ENCODE measurements at regions of chr5 and their contacts with region 1.

Region 1: DNA sequence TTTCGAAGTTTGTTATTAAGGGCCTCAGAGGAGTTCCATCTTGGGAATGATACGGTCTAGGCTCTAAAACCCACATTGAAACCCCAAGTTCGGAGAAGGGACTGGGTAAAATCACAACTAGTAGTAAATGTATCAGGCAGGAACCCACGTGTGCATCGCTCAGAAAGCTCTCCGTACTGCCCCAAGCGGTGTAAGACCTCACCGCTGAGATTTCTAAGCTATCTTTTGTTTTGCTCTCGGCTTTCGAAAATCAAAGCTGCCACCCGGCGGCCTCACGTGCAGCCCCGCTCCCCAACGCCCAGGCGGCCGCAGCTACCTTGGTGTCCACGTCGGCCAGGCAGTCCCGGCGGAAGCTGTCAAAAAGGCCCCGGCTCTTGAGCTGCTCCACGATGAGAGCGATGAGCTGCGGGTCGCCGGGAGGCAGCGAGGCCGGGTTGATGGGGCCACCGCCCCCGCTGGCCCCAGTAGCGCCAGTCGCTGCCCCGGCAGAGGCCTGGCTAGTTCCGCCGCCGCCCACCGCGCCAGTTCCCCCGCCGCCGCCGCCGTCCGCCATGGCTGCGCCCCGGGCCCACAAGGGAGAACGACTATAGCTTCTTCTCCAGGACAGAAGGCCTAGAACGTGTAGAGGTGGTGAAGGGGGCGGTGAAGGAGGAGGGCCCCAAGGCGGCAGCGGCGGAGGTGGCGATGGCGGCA is 420 bp downstream of the BOD1 start:
- DNase-seq: peak; percentile 81
- H3K4me3 ChIP-seq: peak overlapping the region; percentile 69 to 86 (median 82)
- H3K27ac ChIP-seq: peak overlapping the region; percentile 85
- H3K4me1 ChIP-seq: peaks cover 28% of the 10 kb centered on the region
- H3K27me3 ChIP-seq: no peaks in the 10 kb centered on the region
- CTCF ChIP-seq: peak; percentile 67 to 75
- POLR2A ChIP-seq: peak; percentile 15

Region 2: GRCh38 chr5:172833686-172834414 is 782.2 kb before region 1 on chr5 and contains the start of gene ERGIC1:
- CTCF ChIA-PET with region 1: no interaction called
- POLR2A ChIA-PET with region 1: no interaction called
- dilution Hi-C with region 1: no loop called
- intact Hi-C with region 1: no loop called
- DNase-seq: peak; percentile 82
- H3K4me3 ChIP-seq: peak within 1 kb of the TSS; percentile 80 to 96 (median 80)
- H3K27ac ChIP-seq: peak within 1 kb of the TSS; percentile 71
- H3K4me1 ChIP-seq: peaks cover 12% of the 10 kb centered on the region
- H3K27me3 ChIP-seq: no peaks in the 10 kb centered on the region
- CTCF ChIP-seq: no peak
- POLR2A ChIP-seq: peak; percentile 72
- total RNA-seq, gene ERGIC1: 105 and 118 TPM in 2 replicates

Region 3: DNA sequence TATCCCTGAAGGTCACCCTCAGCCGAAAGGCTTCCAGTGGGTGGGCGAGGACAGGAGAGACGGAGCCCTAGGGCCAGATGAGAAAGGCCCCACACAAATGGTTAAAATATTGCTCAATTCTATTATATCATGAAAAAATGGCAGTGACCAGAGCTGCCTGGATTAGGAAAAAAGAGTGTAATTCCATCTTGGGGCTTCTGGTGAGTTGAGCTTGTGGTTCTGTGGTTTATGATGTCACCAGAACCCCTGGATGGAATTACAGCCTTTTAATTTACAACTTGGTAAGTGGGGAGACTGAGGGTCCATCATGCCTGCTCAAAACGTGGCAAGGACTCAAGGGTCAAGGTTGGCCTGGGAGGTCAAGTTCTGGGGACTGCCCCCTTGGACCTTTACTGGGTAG is 232.3 kb before region 1 on chr5:
- CTCF ChIA-PET with region 1: no interaction called
- POLR2A ChIA-PET with region 1: no interaction called
- dilution Hi-C with region 1: no loop called
- intact Hi-C with region 1: no loop called
- DNase-seq: no peak
- H3K4me3 ChIP-seq: no peak overlapping the region
- H3K27ac ChIP-seq: no peak overlapping the region
- H3K4me1 ChIP-seq: no peaks in the 10 kb centered on the region
- H3K27me3 ChIP-seq: no peaks in the 10 kb centered on the region
- CTCF ChIP-seq: no peak
- POLR2A ChIP-seq: no peak

Region 4: DNA sequence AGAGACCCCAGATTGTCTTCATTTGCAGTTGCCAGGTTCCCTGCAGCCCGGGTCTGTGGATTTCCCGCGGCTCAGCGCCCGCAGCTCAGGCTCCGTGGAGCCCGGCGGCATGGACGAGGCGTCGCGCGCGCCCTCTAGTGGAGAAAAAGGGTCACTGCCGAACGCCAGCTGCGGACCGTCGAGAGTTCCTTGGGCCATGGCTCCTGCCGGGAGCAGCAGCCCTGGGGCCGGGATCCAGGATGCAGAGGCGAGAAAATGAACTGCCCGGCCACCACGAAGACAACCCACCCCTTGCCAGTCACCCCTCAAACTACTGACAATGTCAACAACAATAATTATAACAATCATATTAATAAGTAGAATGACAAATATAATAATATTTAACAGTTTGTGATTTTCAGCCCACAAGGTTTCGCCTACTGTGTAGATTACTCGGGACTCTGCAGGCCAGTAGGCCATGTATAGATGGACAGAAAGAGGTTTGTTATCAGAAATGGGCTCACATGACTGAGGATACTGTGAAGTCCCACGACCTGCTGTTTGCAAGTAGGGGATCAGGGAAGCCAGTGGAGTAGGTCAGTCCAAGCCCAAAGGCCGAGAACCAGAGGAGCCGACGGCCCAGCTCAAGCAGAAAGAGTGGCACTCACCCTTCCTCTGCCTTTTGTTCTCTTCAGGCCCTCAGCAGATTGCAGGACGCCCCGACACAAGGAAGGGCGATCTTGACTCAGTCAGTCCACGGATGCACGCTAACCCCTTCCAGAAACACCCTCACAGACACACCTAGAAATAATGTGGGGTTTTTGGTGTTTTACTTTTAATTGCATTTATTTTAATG is 42.7 kb before region 1 on chr5:
- CTCF ChIA-PET with region 1: interaction called, 9 read pairs
- POLR2A ChIA-PET with region 1: no interaction called
- dilution Hi-C with region 1: no loop called
- intact Hi-C with region 1: loop called (anchors 1 kb)
- DNase-seq: peak; percentile 65
- H3K4me3 ChIP-seq: no peak overlapping the region
- H3K27ac ChIP-seq: no peak overlapping the region
- H3K4me1 ChIP-seq: peaks cover 2% of the 10 kb centered on the region
- H3K27me3 ChIP-seq: peaks cover 0 to 4% of the 10 kb centered on the region in 2 experiments
- CTCF ChIP-seq: peak; percentile 94 to 98
- POLR2A ChIP-seq: no peak

Region 5: GRCh38 chr5:173781814-173782670 is 166.0 kb after region 1 on chr5:
- CTCF ChIA-PET with region 1: no interaction called
- POLR2A ChIA-PET with region 1: no interaction called
- dilution Hi-C with region 1: no loop called
- intact Hi-C with region 1: loop called (anchors 1 kb)
- DNase-seq: peak; percentile 94
- H3K4me3 ChIP-seq: no peak overlapping the region
- H3K27ac ChIP-seq: peak overlapping the region; percentile 99
- H3K4me1 ChIP-seq: peaks cover 34% of the 10 kb centered on the region
- H3K27me3 ChIP-seq: no peaks in the 10 kb centered on the region
- CTCF ChIP-seq: no peak
- POLR2A ChIP-seq: peak; percentile 42

Region 6: DNA sequence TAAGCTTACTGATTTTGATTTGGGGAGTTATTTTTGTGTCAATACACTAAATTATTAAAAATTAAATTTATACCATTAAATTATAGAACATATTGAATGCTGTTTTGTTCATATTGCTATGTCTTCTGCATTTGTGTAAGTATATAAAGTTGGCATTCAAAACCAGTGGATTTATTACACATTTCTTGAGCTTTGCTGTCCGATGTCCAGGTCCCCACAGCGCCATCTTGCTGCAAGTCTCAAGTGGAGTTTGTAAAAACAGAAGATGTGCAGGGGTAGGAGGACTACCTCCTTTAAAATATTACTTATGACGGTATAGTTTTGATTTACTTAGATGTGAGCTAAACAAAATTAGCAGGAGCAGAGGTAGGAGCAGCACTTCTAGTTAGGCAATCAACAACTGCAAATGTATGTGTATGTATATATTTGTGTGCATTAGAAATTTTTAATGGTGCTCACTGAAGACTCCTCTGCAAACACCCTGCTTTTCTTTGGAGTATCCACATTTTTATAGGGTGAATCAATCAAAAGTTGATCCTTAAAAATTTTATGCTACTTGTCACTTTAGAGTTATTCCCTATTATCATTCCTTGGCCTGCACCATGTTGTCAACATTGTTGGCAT is 309.5 kb after region 1 on chr5:
- CTCF ChIA-PET with region 1: interaction called, 38 read pairs
- POLR2A ChIA-PET with region 1: interaction called, 3 read pairs
- dilution Hi-C with region 1: no loop called
- intact Hi-C with region 1: loop called (anchors 1 kb)
- DNase-seq: peak; percentile 70
- H3K4me3 ChIP-seq: no peak overlapping the region
- H3K27ac ChIP-seq: no peak overlapping the region
- H3K4me1 ChIP-seq: peaks cover 15% of the 10 kb centered on the region
- H3K27me3 ChIP-seq: no peaks in the 10 kb centered on the region
- CTCF ChIP-seq: peak; percentile 48 to 57
- POLR2A ChIP-seq: no peak

Region 7: GRCh38 chr5:174311531-174312269 is 695.7 kb after region 1 on chr5:
- CTCF ChIA-PET with region 1: interaction called, 61 read pairs
- POLR2A ChIA-PET with region 1: no interaction called
- dilution Hi-C with region 1: no loop called
- intact Hi-C with region 1: loop called (anchors 1 kb)
- DNase-seq: peak; percentile 29
- H3K4me3 ChIP-seq: peak overlapping the region in 1 of 3 experiments; percentile 21
- H3K27ac ChIP-seq: no peak overlapping the region
- H3K4me1 ChIP-seq: no peaks in the 10 kb centered on the region
- H3K27me3 ChIP-seq: no peaks in the 10 kb centered on the region
- CTCF ChIP-seq: peak; percentile 76 to 83
- POLR2A ChIP-seq: no peak